Endothelial cell of umbilical vein (primary cell): ENCODE measurements at regions of chr1 and their contacts with region 1.

Region 1: DNA sequence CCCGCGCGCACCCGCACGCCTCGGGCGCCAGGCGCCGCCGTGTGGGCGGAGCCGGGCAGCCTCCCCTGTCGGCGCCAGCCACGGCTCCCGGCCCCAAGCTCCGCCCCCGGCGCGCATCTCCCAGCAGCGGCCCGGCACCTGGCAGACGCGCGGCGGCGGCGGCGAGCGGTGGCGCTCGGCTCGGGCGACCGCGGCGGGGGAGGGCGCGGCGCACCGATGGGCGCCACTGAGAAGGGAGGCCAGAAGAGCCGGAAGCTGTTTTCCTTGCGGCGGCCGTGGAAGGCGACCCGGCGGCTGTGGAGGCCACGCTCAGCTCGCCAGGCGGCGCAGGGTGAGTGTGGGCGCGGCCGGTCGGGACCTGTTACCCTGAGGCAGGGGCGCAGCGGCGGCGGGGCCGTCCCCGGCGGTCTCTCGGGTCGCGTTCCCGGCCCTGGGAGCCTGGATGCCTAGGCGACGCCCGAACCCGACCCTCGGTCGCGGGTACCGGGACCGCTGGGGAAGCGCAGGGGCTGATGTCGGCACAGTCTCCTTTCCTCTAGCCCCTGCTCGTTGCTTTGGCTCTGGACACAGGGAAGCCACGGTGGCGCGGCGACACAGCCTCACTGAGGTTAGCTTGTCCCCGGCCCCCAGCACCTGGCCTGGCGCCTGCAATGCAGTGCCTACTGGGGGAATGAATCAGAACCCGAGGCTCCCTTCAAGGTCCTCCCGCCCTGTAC is 54.9 kb upstream of the DNAJC6 start:
- DNase-seq: peak; percentile 57
- H3K4me3 ChIP-seq: peak overlapping the region; percentile 44 to 80 (median 70)
- H3K27ac ChIP-seq: peak overlapping the region; percentile 1
- H3K4me1 ChIP-seq: peaks cover 13% of the 10 kb centered on the region
- H3K27me3 ChIP-seq: no peaks in the 10 kb centered on the region
- CTCF ChIP-seq: peak in 1 of 2 donors; percentile 30
- POLR2A ChIP-seq: no peak

Region 2: DNA sequence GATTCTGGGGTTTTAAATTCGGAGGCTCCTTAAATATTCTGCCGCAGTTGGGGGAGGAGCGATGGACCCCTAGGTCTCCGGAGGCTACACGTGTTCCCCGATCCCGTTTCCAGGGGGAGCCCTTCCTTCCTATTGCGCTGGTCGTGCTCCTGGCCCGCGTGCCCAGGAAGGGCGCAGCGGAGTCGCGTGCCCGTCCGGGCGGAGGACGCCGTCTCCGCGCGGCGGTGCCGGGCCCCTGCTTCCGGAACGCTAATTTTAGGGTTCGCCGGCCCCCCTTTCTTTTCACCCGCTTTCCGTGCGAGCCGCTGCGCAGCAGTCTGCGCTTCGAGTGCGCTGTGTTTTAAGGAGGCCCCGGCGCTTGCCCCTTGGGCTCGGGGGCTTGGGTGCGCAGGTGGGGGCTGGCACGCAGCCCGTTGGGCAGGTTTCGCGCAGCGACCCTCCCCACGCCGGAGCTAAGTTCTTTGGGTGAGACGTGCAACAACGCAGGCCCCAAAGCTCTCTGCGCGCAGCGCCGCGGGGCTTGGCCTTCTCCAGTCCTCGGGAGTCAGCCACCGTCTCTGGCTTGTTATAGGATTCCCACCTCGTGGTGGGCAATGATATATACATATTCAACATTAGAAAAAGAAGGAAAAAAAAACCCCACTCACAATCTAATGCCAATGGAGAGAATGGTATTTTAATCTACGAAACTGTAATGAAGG is 11.3 kb after region 1 on chr1:
- CTCF ChIA-PET with region 1: interaction called, 14 read pairs
- POLR2A ChIA-PET with region 1: no interaction called
- dilution Hi-C with region 1: no loop called
- intact Hi-C with region 1: loop called (anchors 1 kb)
- DNase-seq: peak; percentile 17
- H3K4me3 ChIP-seq: peak overlapping the region; percentile 28 to 57 (median 49)
- H3K27ac ChIP-seq: no peak overlapping the region
- H3K4me1 ChIP-seq: peaks cover 17% of the 10 kb centered on the region
- H3K27me3 ChIP-seq: no peaks in the 10 kb centered on the region
- CTCF ChIP-seq: peak; percentile 6 to 31
- POLR2A ChIP-seq: no peak

Region 3: GRCh38 chr1:65459397-65459768 is 204.9 kb after region 1 on chr1:
- CTCF ChIA-PET with region 1: interaction called, 15 read pairs
- POLR2A ChIA-PET with region 1: no interaction called
- dilution Hi-C with region 1: no loop called
- intact Hi-C with region 1: no loop called
- DNase-seq: peak; percentile 50
- H3K4me3 ChIP-seq: no peak overlapping the region
- H3K27ac ChIP-seq: no peak overlapping the region
- H3K4me1 ChIP-seq: no peaks in the 10 kb centered on the region
- H3K27me3 ChIP-seq: no peaks in the 10 kb centered on the region
- CTCF ChIP-seq: peak; percentile 44 to 56
- POLR2A ChIP-seq: no peak

Region 4: DNA sequence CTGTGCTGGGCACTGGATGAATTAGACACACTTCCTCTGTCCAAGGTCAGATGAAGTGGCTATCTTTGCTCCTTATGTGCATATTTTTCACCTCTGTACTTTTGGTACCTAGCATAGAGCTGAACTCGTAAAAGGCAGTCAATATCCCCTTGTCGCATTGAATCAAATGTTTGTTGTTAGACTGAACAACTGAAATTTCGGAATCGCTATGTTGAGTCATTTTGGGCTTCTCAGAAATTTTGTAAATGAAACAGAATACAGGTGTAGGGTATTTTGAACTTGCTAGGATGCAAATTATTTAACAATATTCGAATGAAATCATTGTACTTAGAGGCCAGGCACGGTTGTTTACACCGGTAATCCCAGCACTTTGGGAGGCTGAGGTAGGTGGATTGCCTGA is 586.2 kb after region 1 on chr1:
- CTCF ChIA-PET with region 1: no interaction called
- POLR2A ChIA-PET with region 1: no interaction called
- dilution Hi-C with region 1: no loop called
- intact Hi-C with region 1: no loop called
- DNase-seq: no peak
- H3K4me3 ChIP-seq: no peak overlapping the region
- H3K27ac ChIP-seq: no peak overlapping the region
- H3K4me1 ChIP-seq: peaks cover 4% of the 10 kb centered on the region
- H3K27me3 ChIP-seq: no peaks in the 10 kb centered on the region
- CTCF ChIP-seq: no peak
- POLR2A ChIP-seq: no peak